PC-9 (cell line): ENCODE measurements at regions of chr19 and their contacts with region 1.

Region 1: GRCh38 chr19:38989066-38989605 is 13.6 kb upstream of the FBXO17 start:
- DNase-seq: peak; percentile 69 to 79
- H3K4me3 ChIP-seq: no peak overlapping the region; the same call in 1 of the 2 replicates
- H3K27ac ChIP-seq: peak overlapping the region; percentile 29; the same call in 1 of the 2 replicates
- H3K4me1 ChIP-seq: peaks cover 9% of the 10 kb centered on the region
- H3K27me3 ChIP-seq: no peaks in the 10 kb centered on the region
- CTCF ChIP-seq: no peak

Region 2: DNA sequence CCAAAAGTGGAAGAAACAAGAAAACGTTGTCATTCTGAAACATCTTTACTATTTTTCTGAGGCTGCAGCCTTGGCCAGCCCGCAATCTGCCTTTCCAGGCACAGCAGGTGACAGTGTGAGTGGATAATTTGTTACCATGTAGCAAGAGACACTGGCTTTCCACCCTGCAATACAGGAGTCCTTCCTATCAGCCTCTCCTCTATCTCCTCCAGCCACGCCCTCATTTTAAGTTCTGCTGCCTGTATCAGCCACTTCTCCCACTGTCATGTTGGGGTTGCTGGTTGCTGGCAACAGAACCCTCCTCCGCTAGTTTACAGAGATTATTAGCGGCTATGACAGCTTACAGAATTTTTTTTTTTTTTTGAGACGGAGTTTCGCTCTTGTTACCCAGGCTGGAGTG is 208.1 kb before region 1 on chr19:
- CTCF ChIA-PET with region 1: no interaction called
- POLR2A ChIA-PET with region 1: no interaction called
- intact Hi-C with region 1: no loop called
- DNase-seq: no peak
- H3K4me3 ChIP-seq: no peak overlapping the region
- H3K27ac ChIP-seq: no peak overlapping the region
- H3K4me1 ChIP-seq: no peaks in the 10 kb centered on the region
- H3K27me3 ChIP-seq: no peaks in the 10 kb centered on the region
- CTCF ChIP-seq: no peak

Region 3: DNA sequence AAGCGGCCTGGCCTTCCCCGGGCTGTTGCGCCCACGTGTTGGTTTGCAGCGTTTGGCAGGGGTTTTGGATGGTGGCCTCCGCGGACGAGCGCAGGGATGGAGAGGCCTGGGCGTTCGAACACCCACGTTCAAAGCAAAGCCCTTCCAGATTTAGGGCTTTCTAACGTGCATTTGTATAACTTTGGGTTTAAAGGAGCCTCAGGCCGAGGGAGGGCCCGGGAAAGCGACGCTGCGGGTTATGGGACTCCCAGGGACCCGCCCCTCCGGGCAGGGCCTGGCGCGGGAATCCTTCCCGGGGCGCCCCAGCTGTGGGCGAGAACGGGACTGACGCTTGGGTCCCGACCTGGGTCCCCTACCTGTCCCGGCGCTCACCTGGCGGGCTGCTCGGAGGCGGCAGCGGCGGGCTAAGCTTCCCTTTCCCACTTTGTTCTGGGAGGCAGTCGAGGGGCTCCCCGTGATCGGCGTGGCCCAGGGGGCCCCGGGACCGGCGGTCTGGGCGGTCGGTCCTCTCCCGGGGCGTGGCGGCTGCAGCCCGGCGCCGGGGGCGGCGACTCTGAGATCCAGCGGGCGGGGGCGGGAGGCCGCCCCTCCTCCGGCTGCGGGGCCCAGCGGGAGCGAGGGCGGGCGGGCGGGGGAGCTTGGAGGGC is 13.8 kb before region 1 on chr19 and contains the start of gene FBXO17:
- CTCF ChIA-PET with region 1: interaction called, 3 read pairs
- POLR2A ChIA-PET with region 1: interaction called, 13 read pairs
- intact Hi-C with region 1: no loop called
- DNase-seq: peak in 1 of 2 experiments; percentile 54
- H3K4me3 ChIP-seq: peak within 1 kb of the TSS; percentile 57; the same call in 1 of the 2 replicates
- H3K27ac ChIP-seq: no peak within 1 kb of the TSS
- H3K4me1 ChIP-seq: no peaks in the 10 kb centered on the region
- H3K27me3 ChIP-seq: 0 out of 2 replicates have a peak, but pooled peaks cover 5% of the 10 kb centered on the region
- CTCF ChIP-seq: no peak
- total RNA-seq, gene FBXO17: 8.1 and 11.1 TPM in 2 replicates